CD8-positive, alpha-beta memory T cell (primary cell): ENCODE measurements at regions of chr2 and their contacts with region 1.

Region 1: GRCh38 chr2:180125245-180125962 is 118.3 kb upstream of the CWC22 start:
- DNase-seq: peak; percentile 3 to 65 (median 23)
- H3K4me3 ChIP-seq: no peak overlapping the region
- H3K4me3 Mint-ChIP-seq: peak overlapping the region in 1 of 7 donors; percentile 22
- H3K27ac ChIP-seq: no peak overlapping the region
- H3K27ac Mint-ChIP-seq: no peak overlapping the region
- H3K4me1 ChIP-seq: peaks cover 3% of the 10 kb centered on the region
- H3K4me1 Mint-ChIP-seq: peaks cover 1 to 14% (median 5%) of the 10 kb centered on the region in 3 donors
- H3K27me3 ChIP-seq: no peaks in the 10 kb centered on the region
- H3K27me3 Mint-ChIP-seq: peaks cover 5 to 24% of the 10 kb centered on the region in 2 donors

Region 2: DNA sequence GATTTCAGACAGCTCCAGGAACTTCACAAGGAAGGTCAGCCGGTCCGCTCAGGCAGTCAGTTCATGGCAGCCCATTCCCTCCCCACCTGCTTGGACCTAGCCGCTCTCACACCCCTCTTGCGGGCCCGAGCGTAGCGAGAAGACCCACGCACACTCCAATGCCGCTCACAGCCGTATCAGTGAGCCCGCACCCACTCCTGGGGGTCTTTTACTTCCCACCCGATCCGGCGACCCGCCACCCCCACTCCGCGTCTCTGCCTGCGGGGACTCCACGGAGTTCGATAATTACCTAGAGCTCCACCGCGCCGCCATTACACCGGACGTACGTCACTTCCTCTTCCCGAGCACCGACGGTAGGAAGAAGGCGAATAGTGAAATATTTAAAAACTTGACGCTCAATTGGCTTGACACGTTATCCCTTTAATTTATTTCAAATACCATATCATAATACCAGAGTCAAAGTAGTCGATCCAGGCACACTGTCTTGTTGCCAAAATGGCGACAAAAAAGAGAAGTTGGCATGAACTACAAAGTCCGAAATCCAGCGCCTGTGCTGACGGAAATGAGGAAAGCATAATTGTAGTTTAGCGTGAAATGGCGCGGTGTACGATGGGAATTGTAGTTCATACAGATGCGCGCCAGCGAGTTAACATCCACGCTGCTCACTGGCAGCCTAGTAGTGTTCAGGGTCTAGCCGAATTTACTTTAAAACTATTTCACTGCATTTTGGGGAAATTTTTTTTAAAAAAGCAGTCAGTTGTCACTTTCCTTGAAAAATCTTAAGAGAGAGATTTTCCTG is 118.4 kb before region 1 on chr2 and contains the start of gene CWC22:
- CTCF ChIA-PET with region 1: no interaction called
- POLR2A ChIA-PET with region 1: no interaction called
- DNase-seq: peak; percentile 72 to 90 (median 88)
- H3K4me3 ChIP-seq: peak within 1 kb of the TSS; percentile 85
- H3K4me3 Mint-ChIP-seq: peak within 1 kb of the TSS; percentile 95 to 97 (median 97)
- H3K27ac ChIP-seq: peak within 1 kb of the TSS; percentile 97
- H3K27ac Mint-ChIP-seq: peak within 1 kb of the TSS; percentile 99 to 100 (median 100)
- H3K4me1 ChIP-seq: peaks cover 27% of the 10 kb centered on the region
- H3K4me1 Mint-ChIP-seq: peaks cover 34 to 53% (median 51%) of the 10 kb centered on the region in 3 donors
- H3K27me3 ChIP-seq: no peaks in the 10 kb centered on the region
- H3K27me3 Mint-ChIP-seq: no peaks in the 10 kb centered on the region
- total RNA-seq, gene CWC22: 30.9 to 32.7 TPM

Region 3: DNA sequence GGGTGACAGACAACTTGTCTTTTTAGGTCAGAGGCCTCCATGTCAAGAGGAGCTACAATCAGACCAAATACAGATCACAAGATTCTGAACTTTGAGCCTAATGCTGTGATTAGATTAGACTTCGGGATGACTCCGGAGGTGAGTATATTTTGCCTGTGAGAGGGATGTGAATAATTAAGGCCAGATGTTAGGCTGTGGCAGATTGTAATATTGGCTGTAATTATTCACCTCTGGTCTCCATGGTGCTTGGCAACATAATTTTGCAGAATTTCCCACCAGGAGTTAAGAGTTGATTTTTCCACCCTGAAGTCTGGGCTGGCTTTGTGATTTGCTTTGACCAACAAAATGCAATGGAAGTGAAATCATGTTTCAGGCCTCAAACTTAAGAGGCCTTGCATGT is 10.1 kb before region 1 on chr2:
- CTCF ChIA-PET with region 1: interaction called, 10 read pairs
- POLR2A ChIA-PET with region 1: no interaction called
- DNase-seq: no peak
- H3K4me3 ChIP-seq: no peak overlapping the region
- H3K4me3 Mint-ChIP-seq: no peak overlapping the region
- H3K27ac ChIP-seq: no peak overlapping the region
- H3K27ac Mint-ChIP-seq: no peak overlapping the region
- H3K4me1 ChIP-seq: no peaks in the 10 kb centered on the region
- H3K4me1 Mint-ChIP-seq: no peaks in the 10 kb centered on the region
- H3K27me3 ChIP-seq: no peaks in the 10 kb centered on the region
- H3K27me3 Mint-ChIP-seq: peaks cover 4 to 29% of the 10 kb centered on the region in 2 donors

Region 4: DNA sequence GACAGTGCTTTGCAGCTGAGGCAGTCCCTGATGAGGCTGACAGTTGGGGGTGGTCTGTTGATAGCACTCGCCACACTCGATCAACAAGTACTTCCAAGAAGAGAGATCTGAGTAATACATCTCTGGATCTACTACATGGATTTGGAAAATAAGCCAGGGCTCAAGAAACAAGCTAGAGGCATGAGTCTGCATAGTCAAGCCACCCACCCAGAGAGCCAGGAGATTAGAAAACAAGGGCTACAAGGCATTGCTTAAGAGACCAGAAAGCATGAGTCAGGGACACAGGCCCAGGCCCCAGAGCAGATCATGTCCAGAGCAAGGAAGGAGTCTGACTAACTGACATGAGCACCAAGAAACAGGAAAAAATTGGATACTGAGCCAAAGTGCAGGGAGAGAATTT is 78.6 kb after region 1 on chr2:
- CTCF ChIA-PET with region 1: no interaction called
- POLR2A ChIA-PET with region 1: no interaction called
- DNase-seq: no peak
- H3K4me3 ChIP-seq: no peak overlapping the region
- H3K4me3 Mint-ChIP-seq: no peak overlapping the region
- H3K27ac ChIP-seq: no peak overlapping the region
- H3K27ac Mint-ChIP-seq: no peak overlapping the region
- H3K4me1 ChIP-seq: no peaks in the 10 kb centered on the region
- H3K4me1 Mint-ChIP-seq: no peaks in the 10 kb centered on the region
- H3K27me3 ChIP-seq: no peaks in the 10 kb centered on the region
- H3K27me3 Mint-ChIP-seq: peaks cover 3% of the 10 kb centered on the region in 2 donors

Region 5: DNA sequence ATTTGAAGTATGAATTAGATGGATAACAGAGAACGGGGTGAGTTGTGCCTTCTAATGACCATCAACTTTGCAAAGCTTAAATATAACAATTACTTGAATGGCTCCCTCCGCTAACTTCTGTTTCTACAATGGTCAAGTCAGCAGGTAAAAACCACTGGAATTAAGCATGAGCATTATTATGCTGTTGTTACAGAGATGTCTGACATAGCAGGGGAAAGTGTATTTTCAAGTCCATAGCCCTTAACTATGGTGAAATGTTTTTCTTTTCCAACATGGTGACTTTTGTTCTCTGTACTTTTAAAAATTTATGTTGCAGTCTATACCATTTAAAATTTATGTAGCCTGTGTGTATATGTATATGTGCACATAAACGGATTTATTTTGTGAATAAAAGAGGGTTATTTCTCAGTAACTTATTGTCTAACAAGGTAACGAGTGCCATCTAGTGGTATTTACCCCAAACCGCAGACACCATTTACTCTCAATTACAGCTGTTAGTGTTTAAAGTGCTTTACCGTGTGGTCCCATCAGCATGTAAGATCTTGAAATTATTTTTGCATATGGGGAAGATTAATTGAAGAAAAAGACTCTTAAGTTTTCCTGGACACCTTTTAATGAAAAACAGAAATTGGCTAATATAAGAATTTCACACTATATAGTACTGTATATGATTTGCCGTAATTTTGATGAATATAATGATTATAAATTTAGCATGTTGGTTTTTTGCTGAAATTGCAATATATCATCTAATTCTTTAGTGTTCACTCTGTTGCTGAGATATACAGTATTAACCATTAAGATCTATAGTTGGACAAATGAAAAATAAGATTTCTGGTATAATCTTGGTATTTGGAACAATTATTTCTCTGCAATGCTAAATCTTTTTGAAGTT is 933.2 kb after region 1 on chr2:
- CTCF ChIA-PET with region 1: interaction called, 42 read pairs
- POLR2A ChIA-PET with region 1: no interaction called
- DNase-seq: peak in 4 of 5 donors; percentile 22 to 56 (median 37)
- H3K4me3 ChIP-seq: no peak overlapping the region
- H3K4me3 Mint-ChIP-seq: no peak overlapping the region
- H3K27ac ChIP-seq: no peak overlapping the region
- H3K27ac Mint-ChIP-seq: no peak overlapping the region
- H3K4me1 ChIP-seq: no peaks in the 10 kb centered on the region
- H3K4me1 Mint-ChIP-seq: peaks cover 9 to 14% (median 9%) of the 10 kb centered on the region in 3 donors
- H3K27me3 ChIP-seq: no peaks in the 10 kb centered on the region
- H3K27me3 Mint-ChIP-seq: no peaks in the 10 kb centered on the region

Region 6: DNA sequence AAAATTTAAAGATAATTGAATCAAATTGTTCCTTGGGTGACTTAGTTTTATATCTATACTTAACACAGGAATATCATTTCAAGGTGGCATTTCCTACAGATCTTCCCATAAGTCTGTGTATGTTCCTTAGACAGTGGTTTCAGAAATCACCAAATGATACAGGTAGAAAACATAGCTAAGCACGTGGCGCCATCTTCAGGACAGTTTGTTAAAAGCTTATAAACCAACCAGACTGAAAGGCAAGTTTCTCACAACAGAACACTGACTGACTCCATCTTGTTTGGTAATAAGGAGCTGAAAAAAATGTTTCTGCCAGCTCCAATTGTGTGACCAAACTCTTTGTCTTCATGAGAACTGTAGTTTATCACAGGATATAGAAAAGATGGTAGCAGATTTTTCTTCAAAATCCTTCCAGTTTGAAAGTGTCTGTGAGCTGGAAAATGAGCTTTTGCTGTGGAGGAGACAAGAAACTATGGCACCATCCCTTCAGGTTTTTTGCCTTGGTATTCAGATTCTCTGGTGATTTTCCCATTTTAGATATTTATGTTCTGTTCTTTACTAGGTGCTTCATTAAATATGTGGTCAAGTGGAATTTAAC is 1589.7 kb after region 1 on chr2:
- CTCF ChIA-PET with region 1: interaction called, 10 read pairs
- POLR2A ChIA-PET with region 1: no interaction called
- DNase-seq: peak; percentile 39 to 70 (median 55)
- H3K4me3 ChIP-seq: no peak overlapping the region
- H3K4me3 Mint-ChIP-seq: no peak overlapping the region
- H3K27ac ChIP-seq: no peak overlapping the region
- H3K27ac Mint-ChIP-seq: no peak overlapping the region
- H3K4me1 ChIP-seq: no peaks in the 10 kb centered on the region
- H3K4me1 Mint-ChIP-seq: no peaks in the 10 kb centered on the region
- H3K27me3 ChIP-seq: no peaks in the 10 kb centered on the region
- H3K27me3 Mint-ChIP-seq: peaks cover 0 to 1% of the 10 kb centered on the region in 2 donors